ENCODE measurements at regions of chr12 and their contacts with region 1.

Region 1: GRCh38 chr12:130761537-130762318 is 45.6 kb upstream of the RIMBP2 start:
- DNase-seq: peak; percentile 45
- H3K4me3 Mint-ChIP-seq: no peak overlapping the region
- H3K27ac Mint-ChIP-seq: no peak overlapping the region
- H3K4me1 Mint-ChIP-seq: no peaks in the 10 kb centered on the region
- H3K27me3 Mint-ChIP-seq: no peaks in the 10 kb centered on the region
- CTCF ChIP-seq: peak; percentile 85

Region 2: GRCh38 chr12:130728158-130729058 is 33.3 kb before region 1 on chr12:
- CTCF ChIA-PET with region 1: no interaction called
- POLR2A ChIA-PET with region 1: no interaction called
- intact Hi-C with region 1: no loop called
- DNase-seq: no peak
- H3K4me3 Mint-ChIP-seq: no peak overlapping the region
- H3K27ac Mint-ChIP-seq: no peak overlapping the region
- H3K4me1 Mint-ChIP-seq: no peaks in the 10 kb centered on the region
- H3K27me3 Mint-ChIP-seq: peaks cover under 1% of the 10 kb centered on the region
- CTCF ChIP-seq: no peak

Region 3: DNA sequence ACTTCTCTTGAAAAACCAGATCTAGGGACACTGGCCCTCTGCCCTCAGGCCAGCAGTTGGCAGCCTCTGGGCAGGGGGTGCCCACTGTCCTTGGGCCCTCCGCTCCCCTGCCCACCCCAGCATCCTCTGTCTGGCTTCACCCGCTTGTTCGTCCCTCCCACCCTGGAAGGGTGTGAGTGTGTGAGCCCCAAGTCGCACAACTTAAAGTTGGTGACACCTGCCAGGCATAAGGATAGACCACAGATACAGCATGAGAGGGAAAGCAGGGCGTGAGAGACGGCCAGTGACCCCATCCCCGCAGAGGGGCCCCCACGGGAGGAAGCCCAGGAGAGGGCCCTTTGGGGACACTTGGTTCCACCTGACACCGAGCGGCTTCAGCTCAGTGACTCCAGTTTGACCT is 22.2 kb before region 1 on chr12:
- CTCF ChIA-PET with region 1: no interaction called
- POLR2A ChIA-PET with region 1: no interaction called
- intact Hi-C with region 1: no loop called
- DNase-seq: no peak
- H3K4me3 Mint-ChIP-seq: no peak overlapping the region
- H3K27ac Mint-ChIP-seq: no peak overlapping the region
- H3K4me1 Mint-ChIP-seq: no peaks in the 10 kb centered on the region
- H3K27me3 Mint-ChIP-seq: peaks cover 41% of the 10 kb centered on the region
- CTCF ChIP-seq: no peak

Region 4: DNA sequence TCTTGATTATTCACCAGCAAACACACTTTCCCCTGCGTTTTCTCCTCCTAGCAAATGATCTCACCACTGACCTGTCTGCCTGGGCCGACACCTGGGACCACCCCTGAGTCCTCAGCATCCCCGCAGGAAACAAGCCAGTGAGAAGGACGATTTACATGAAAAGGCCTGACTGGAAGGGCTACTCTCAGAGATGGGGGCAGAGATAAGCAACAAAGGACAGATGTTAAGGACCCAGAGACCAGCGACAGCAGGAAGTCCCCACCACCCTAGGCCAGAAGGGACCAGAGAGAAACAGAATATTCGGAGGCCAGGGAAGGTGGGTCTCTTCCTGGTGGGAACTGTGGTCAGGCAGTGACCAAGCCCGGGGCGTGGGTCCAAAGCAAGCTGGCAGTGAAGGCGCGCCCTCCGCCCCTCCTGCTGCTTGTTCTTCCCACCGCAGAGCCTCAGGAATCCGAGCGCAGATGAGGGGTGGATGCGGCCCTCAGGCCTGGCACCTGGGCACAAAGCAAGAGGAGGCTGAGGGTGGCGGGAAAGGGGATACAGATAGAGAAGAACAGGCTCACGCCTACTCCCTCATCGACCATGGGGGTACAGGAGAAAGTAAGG is 21.5 kb after region 1 on chr12:
- CTCF ChIA-PET with region 1: no interaction called
- POLR2A ChIA-PET with region 1: no interaction called
- intact Hi-C with region 1: no loop called
- DNase-seq: no peak
- H3K4me3 Mint-ChIP-seq: no peak overlapping the region
- H3K27ac Mint-ChIP-seq: no peak overlapping the region
- H3K4me1 Mint-ChIP-seq: no peaks in the 10 kb centered on the region
- H3K27me3 Mint-ChIP-seq: no peaks in the 10 kb centered on the region
- CTCF ChIP-seq: no peak

Region 5: DNA sequence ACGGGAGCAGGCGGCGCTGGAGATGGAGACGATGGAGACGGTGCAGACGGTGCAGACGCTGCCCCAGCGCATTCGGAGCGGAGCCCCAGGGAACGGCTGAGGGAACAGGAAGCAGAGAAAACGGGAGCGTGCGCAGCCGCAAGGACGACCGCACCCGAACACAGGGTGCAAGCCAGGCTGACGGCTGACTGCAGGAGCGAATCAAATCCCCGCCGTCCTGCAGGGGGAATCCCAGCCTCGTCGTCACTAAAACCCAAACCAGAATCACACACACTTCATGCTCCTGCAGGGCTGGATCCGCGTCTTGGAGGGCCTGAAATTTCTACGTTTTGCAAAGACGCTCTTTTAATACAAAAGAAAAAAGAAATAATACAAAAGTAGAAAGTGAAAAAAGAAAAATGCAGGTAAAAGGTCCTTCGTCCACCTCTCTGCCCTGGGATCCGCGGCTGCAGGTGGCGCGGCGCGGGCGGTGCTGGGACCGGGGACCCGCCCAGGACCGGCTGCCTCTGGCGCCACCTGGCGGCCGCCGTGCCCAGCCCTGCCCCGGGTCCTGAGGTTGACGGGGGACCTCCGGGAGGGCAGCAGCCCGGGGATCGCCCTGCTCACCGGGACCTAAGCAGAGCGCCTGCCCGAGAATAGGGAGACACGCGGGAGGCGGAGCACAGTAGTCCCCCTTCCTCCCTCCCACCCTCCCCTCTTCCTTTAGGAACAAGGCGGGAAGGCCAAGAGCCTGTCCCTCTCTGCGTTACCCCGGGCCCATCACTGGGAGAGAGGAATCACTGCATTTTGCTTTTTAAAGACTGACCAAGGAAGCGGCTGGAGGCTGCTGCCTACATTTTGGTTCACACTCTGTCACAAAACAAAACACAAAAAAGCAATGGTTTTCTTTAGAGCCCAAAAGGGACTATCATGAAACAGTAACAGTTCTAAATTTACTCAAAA is 57.2 kb after region 1 on chr12:
- CTCF ChIA-PET with region 1: interaction called, 9 read pairs
- POLR2A ChIA-PET with region 1: no interaction called
- intact Hi-C with region 1: loop called (anchors 1 kb)
- DNase-seq: peak; percentile 36
- H3K4me3 Mint-ChIP-seq: peak overlapping the region; percentile 69
- H3K27ac Mint-ChIP-seq: peak overlapping the region; percentile 49
- H3K4me1 Mint-ChIP-seq: peaks cover 4% of the 10 kb centered on the region
- H3K27me3 Mint-ChIP-seq: no peaks in the 10 kb centered on the region
- CTCF ChIP-seq: peak; percentile 83

Region 6: GRCh38 chr12:130879212-130879686 is 117.5 kb after region 1 on chr12:
- CTCF ChIA-PET with region 1: no interaction called
- POLR2A ChIA-PET with region 1: no interaction called
- intact Hi-C with region 1: no loop called
- DNase-seq: no peak
- H3K4me3 Mint-ChIP-seq: no peak overlapping the region
- H3K27ac Mint-ChIP-seq: no peak overlapping the region
- H3K4me1 Mint-ChIP-seq: peaks cover 10% of the 10 kb centered on the region
- H3K27me3 Mint-ChIP-seq: no peaks in the 10 kb centered on the region
- CTCF ChIP-seq: no peak

Region 7: GRCh38 chr12:131092901-131093603 is 331.3 kb after region 1 on chr12:
- CTCF ChIA-PET with region 1: interaction called, 3 read pairs
- POLR2A ChIA-PET with region 1: no interaction called
- intact Hi-C with region 1: loop called (anchors 10 kb)
- DNase-seq: peak; percentile 78
- H3K4me3 Mint-ChIP-seq: no peak overlapping the region
- H3K27ac Mint-ChIP-seq: no peak overlapping the region
- H3K4me1 Mint-ChIP-seq: peaks cover 11% of the 10 kb centered on the region
- H3K27me3 Mint-ChIP-seq: peaks cover 22% of the 10 kb centered on the region
- CTCF ChIP-seq: no peak